Cardiac septum (tissue), 1 donor: ENCODE measurements at regions of chr3 and their contacts with region 1.

Region 1: GRCh38 chr3:57646723-57647122 is 46.2 kb downstream of the DENND6A start:
- DNase-seq: no peak

Region 2: DNA sequence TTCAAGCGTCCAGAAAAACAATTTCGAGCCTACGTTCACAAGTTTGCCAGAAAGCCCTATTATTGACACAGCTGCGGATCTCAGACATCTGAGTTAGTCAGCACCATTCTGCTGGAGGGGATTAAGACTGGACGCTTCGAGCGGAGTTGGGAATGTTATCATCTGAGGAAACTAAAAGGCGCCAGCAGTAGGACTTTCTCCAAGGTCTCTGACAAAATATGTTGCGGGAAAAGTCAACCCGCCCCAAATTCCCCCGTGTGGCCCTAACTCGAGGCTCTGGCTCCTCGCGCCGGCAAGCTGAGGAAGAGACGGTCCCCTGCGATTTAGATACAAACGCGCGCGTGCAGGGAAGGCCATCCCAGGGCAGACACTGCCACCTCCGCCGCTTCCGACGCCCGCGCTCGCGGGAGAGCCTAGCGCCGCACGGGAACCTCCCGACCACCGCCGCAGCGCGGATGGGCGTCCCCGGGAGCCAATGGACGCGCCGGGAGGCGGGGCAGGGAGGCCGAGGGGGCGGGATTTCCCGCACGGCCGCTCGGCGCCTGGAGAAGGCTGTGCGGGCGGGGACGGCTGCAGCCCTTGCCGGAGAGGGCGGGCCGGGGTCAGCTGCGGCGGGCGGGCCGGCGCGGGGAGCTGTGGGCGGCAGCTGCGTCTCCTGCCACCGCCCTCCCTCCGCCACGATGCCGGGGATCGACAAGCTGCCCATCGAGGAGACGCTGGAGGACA is 419.4 kb before region 1 on chr3 and contains the start of gene APPL1:
- intact Hi-C with region 1: no loop called
- DNase-seq: peak; percentile 98
- total RNA-seq, gene APPL1: 48.6 TPM

Region 3: DNA sequence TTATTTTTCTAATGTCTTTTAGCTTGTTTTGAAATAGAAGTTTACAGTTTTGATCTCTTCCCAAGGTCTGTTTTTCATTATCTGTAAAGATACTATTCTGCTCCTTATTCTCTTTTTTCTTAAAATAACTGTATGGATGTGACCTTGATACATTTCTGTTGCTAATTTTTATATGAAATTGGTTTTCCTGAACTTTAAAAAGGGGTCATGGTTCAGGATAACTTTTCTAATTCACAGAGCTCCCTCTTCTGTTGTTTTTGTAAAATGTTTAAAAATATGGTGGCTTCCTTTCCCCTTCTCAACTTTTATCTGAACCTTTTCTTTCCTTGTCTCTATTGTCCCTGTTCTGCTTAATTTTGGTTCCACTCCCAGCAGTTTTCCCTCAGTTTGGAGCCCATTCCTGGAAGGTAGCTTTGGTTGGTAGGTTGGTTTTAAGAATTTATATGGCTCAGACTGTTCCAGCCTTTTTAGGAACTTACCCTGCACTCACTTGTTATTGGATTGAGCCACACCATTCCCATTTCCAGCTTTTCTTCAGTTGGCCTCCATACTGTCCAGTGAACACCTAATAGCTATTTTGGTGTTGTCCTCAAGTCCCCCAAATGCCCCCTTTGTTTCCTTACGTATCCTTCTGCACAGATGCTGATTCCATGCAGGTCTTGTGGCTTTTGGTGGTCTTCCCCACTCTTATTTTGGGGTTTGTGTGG is 179.7 kb after region 1 on chr3:
- intact Hi-C with region 1: loop called (anchors 5 kb)
- DNase-seq: no peak

Region 4: GRCh38 chr3:57852896-57853295 is 206.2 kb after region 1 on chr3:
- intact Hi-C with region 1: loop called (anchors 10 kb)
- DNase-seq: no peak